IMR-90 (cell line): ENCODE measurements at regions of chr5 and their contacts with region 1.

Region 1: DNA sequence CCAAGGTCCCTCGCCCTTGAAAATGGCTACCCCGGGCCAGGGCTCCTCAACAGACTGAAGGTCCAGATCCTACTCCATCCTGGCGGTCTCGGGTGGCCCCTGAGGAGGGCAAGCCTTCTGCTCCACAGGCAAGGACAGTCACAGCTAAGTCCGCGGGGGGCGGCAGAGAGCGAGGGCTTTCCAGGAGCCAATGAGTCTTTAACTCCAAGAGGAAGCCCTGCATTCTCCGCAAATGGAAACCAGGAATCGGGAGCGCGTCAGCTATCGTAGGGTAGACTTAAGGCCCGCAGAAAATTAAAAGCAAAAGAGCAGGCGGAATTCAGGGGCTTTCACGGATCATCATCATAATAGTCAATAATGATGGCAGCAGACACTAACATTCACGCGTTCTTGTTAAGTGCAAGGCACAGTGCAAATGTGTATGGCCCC is 87.8 kb upstream of the TNFAIP8 start:
- DNase-seq: peak; percentile 95
- ATAC-seq: peak; percentile 90
- H3K4me3 ChIP-seq: peak overlapping the region; percentile 76
- H3K27ac ChIP-seq: peak overlapping the region; percentile 76
- H3K4me1 ChIP-seq: peaks cover 4% of the 10 kb centered on the region; the same call in 1 of the 2 replicates
- H3K27me3 ChIP-seq: no peaks in the 10 kb centered on the region
- CTCF ChIP-seq: peak; percentile 62
- POLR2A ChIP-seq: no peak
- RAD21 ChIP-seq: peak; percentile 39

Region 2: DNA sequence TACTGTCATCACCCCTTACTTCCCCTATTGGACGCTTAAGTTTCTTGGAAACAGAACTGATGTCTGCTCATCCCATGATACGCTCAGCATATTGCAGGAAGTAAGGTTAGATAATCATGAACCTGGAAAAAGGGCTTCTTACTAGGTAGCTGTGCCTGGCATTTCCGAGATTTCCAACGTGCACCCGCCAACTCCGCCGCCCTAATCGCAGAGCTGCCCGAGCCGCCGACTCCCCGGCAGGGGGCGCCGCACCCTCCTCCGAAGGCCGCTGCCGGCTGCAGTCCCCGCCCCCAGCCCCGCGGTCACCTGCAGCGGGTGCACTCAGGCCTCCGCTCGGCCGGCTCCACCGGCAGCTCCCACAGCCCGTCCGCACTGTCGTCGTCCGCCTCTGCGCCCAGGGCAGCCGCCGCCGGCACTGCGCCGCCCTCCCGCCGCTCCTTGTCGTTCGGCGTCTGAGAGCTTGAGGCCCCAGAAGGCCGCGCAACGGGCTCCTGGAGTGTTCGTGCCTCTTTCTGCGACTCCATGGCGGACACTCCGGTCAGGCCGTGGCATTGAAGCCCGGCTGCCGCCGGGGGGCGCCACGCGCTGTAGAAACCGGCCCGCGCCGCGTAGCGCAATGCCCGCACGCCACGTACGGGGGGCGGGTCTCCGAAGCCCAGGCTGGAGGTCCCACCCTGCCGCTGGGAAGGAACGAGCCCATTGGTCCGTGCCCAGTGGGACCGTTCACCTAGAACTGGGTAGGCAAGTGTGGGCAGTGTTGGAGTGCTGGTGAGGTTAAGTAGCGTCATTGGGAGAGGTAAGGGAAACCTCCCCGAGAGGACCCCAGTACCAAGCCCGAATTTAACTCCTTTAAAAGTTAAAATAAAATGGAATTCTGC is 279.7 kb before region 1 on chr5 and contains the start of gene DTWD2:
- CTCF ChIA-PET with region 1: interaction called, 4 read pairs
- POLR2A ChIA-PET with region 1: no interaction called
- dilution Hi-C with region 1: no loop called
- in situ Hi-C with region 1: no loop called
- intact Hi-C with region 1: loop called (anchors 2 kb)
- DNase-seq: peak; percentile 88
- ATAC-seq: peak; percentile 98
- H3K4me3 ChIP-seq: peak within 1 kb of the TSS; percentile 66
- H3K27ac ChIP-seq: peak within 1 kb of the TSS; percentile 66
- H3K4me1 ChIP-seq: no peaks in the 10 kb centered on the region
- H3K27me3 ChIP-seq: no peaks in the 10 kb centered on the region
- CTCF ChIP-seq: peak; percentile 93
- POLR2A ChIP-seq: no peak
- RAD21 ChIP-seq: peak; percentile 82
- total RNA-seq, gene DTWD2: 1.8 and 2.5 TPM in 2 replicates

Region 3: DNA sequence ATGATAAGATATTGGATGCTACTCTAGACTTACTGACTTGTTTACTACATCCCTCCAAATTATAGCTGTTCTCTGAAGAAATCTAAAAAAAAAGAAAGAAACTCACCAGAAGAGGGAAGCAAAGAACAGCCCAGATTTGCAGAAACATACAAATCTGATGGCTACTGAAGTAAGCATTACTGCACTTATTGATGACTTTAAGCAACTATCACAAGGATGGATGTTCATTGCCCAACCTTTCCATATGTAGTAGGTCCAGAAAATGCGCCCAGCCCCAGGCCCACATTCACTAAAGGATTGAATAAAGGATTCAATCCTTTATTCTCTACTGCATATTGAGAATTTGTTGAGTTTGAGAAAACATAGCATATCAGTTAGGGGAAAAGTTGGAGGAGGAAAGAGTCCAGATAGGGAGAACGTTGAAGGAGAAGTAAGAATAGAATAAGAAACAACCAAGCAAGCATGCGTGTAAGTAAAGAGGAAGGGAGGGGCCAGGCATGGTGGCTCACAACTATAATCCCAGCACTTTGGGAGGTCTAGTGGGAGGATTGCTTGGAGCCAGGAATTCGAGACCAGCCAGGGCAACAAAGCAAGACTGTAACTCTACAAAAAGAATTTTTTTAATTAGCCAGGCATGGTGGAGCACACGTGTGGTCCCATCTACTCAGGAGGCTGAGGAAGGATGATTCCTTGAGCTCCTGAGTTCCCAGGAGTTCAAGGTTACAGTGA is 245.8 kb before region 1 on chr5:
- CTCF ChIA-PET with region 1: interaction called, 3 read pairs
- POLR2A ChIA-PET with region 1: no interaction called
- dilution Hi-C with region 1: no loop called
- in situ Hi-C with region 1: no loop called
- intact Hi-C with region 1: loop called (anchors 10 kb)
- DNase-seq: peak; percentile 57
- ATAC-seq: peak; percentile 80
- H3K4me3 ChIP-seq: no peak overlapping the region
- H3K27ac ChIP-seq: no peak overlapping the region
- H3K4me1 ChIP-seq: no peaks in the 10 kb centered on the region
- H3K27me3 ChIP-seq: no peaks in the 10 kb centered on the region
- CTCF ChIP-seq: peak; percentile 66
- POLR2A ChIP-seq: no peak
- RAD21 ChIP-seq: peak; percentile 80

Region 4: GRCh38 chr5:119302916-119303897 is 35.2 kb after region 1 on chr5:
- CTCF ChIA-PET with region 1: interaction called, 6 read pairs
- POLR2A ChIA-PET with region 1: no interaction called
- dilution Hi-C with region 1: no loop called
- in situ Hi-C with region 1: no loop called
- intact Hi-C with region 1: loop called (anchors 1 kb)
- DNase-seq: peak; percentile 99
- ATAC-seq: peak; percentile 97
- H3K4me3 ChIP-seq: no peak overlapping the region
- H3K27ac ChIP-seq: peak overlapping the region; percentile 91
- H3K4me1 ChIP-seq: peaks cover 16% of the 10 kb centered on the region
- H3K27me3 ChIP-seq: no peaks in the 10 kb centered on the region
- CTCF ChIP-seq: no peak; the same call in 1 of the 2 replicates
- POLR2A ChIP-seq: peak; percentile 33; the same call in 1 of the 2 replicates
- RAD21 ChIP-seq: peak; percentile 26

Region 5: GRCh38 chr5:119355685-119356611 is 88.0 kb after region 1 on chr5 and contains the start of gene TNFAIP8:
- CTCF ChIA-PET with region 1: interaction called, 6 read pairs
- POLR2A ChIA-PET with region 1: no interaction called
- dilution Hi-C with region 1: no loop called
- in situ Hi-C with region 1: no loop called
- intact Hi-C with region 1: loop called (anchors 2 kb)
- DNase-seq: peak; percentile 70
- ATAC-seq: peak; percentile 78
- H3K4me3 ChIP-seq: peak within 1 kb of the TSS; percentile 74
- H3K27ac ChIP-seq: peak within 1 kb of the TSS; percentile 88
- H3K4me1 ChIP-seq: peaks cover 14% of the 10 kb centered on the region
- H3K27me3 ChIP-seq: no peaks in the 10 kb centered on the region
- CTCF ChIP-seq: no peak
- POLR2A ChIP-seq: no peak
- RAD21 ChIP-seq: no peak
- total RNA-seq, gene TNFAIP8: 29.9 and 42.5 TPM in 2 replicates

Region 6: GRCh38 chr5:119373449-119373858 is 105.5 kb after region 1 on chr5:
- CTCF ChIA-PET with region 1: no interaction called
- POLR2A ChIA-PET with region 1: no interaction called
- dilution Hi-C with region 1: no loop called
- in situ Hi-C with region 1: no loop called
- intact Hi-C with region 1: no loop called
- DNase-seq: no peak
- ATAC-seq: no peak
- H3K4me3 ChIP-seq: no peak overlapping the region
- H3K27ac ChIP-seq: no peak overlapping the region
- H3K4me1 ChIP-seq: peaks cover 9% of the 10 kb centered on the region
- H3K27me3 ChIP-seq: no peaks in the 10 kb centered on the region
- CTCF ChIP-seq: no peak
- POLR2A ChIP-seq: no peak
- RAD21 ChIP-seq: no peak